Activated T-helper 1 cell treated with anti-CD3 and anti-CD28 coated beads, Interleukin-12 subunit alpha, Interleukin-12 subunit beta, Interleukin-2, Interleukin-4 antibody, amounts not matched to agents 30 ng/mL and 10 ng/mL and 1 ng/mL, durations not matched to agents 14 hours and 24 hours and 36 hours (primary cell): ENCODE measurements at regions of chr12 and their contacts with region 1.

Region 1: DNA sequence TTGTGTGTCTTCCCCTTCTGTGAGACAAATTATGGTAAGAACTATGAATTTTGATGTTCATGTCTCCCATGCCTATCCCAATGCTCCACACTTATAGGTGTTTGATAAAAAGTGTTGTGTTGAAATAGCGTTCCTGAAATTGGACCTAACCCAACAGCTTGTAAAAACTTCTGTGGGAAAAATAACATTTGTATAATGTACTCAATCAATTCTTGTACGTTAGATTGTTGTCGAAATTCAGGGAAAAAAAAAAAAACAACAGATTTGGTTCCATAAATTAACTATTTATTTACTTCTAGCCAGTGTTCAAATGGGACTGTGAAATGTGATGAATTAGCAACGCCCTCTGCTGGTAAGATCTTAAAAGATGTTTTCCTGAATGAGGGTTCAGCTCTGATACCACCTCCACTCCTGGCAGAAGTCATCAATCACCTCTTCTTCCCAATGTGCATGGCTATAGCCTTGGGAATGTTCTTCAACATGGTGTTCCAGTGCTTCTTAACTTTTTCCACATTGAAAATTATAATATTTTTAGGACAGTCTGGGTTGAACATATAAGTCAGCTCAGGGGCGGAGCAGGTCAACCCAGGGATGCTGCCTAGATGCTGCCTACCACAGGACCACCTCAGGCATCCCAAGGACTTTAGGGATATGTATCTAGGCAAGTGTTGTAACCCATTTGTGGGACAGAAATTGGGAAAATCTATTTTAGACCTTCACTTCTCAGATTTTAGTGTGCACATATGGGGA is 170.6 kb downstream of the OTOGL start:
- DNase-seq: no peak
- H3K4me3 Mint-ChIP-seq: no peak overlapping the region
- H3K27ac Mint-ChIP-seq: no peak overlapping the region
- H3K4me1 Mint-ChIP-seq: no peaks in the 10 kb centered on the region
- H3K27me3 Mint-ChIP-seq: no peaks in the 10 kb centered on the region

Region 2: DNA sequence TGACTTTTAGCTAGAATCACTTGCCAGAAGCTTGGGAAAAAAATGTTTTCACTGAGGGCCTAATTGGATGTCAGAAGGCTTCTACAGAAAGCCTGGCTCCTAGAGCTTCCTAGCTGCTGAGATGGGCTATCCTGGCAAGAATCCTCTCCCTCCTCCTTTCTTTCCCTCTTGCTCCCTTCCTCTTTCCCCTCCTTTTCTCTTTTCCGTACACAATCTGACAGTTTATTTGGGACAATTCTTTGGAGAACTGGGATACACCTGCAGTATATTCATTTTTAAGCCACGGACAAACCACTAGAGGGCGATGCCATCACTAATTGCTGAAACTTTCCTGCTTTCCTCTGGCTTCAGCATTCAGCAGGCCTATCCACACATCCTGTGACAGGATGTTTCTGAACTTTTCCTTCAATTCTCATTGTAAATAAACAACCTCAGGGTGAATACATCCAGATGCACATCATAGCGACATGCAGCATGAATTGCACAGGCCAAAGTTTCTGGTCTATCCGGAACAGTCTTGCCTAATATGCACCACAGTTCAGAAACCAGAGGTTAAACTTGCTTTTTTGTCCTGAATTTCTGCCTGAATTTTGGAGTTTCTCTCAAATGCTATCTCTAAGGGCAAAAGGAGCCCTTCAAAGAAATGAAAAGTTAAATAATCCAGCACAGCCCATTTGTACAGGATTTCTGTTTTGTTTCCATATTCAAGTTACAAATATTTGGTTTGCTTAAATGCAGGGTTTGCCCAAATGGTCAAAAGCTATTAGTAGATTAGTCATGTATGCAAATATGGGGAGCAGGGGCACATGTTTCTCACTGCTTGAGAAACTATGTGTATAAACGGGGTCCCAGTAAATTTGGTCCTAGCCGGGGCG is 722.0 kb before region 1 on chr12:
- intact Hi-C with region 1: loop called (anchors 1 kb)
- DNase-seq: no peak
- H3K4me3 Mint-ChIP-seq: no peak overlapping the region
- H3K27ac Mint-ChIP-seq: no peak overlapping the region
- H3K4me1 Mint-ChIP-seq: no peaks in the 10 kb centered on the region
- H3K27me3 Mint-ChIP-seq: no peaks in the 10 kb centered on the region

Region 3: GRCh38 chr12:79737875-79738718 is 531.9 kb before region 1 on chr12:
- intact Hi-C with region 1: loop called (anchors 10 kb)
- DNase-seq: no peak
- H3K4me3 Mint-ChIP-seq: no peak overlapping the region
- H3K27ac Mint-ChIP-seq: no peak overlapping the region
- H3K4me1 Mint-ChIP-seq: no peaks in the 10 kb centered on the region
- H3K27me3 Mint-ChIP-seq: peaks cover 4% of the 10 kb centered on the region

Region 4: DNA sequence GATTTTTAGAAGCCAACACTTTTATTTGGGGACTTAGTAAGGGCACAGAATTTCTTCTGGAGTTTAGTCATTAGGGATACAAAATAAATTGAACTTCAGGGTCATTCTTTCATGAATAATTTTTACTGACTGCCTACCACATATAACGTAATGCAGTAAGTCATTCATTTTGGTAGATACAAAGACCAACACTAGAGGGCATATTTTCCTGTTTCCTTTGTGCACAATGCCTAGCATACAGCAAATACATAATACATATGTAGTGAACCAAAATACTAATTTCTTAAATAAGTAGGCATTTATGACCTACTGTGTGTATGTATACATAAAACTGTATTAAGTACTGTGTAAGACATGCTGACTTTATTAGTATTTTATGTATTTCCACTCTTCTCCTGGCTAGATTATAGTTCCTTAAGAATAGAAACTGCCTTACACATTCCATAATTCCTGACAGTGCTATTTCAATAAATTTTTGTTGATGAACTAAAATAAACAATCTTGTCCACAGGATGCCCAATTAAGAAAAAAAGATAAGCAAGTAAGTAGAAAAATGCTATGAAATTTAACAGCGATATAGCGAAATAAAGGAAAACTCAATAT is 383.0 kb before region 1 on chr12:
- intact Hi-C with region 1: loop called (anchors 1 kb)
- DNase-seq: no peak
- H3K4me3 Mint-ChIP-seq: no peak overlapping the region
- H3K27ac Mint-ChIP-seq: no peak overlapping the region
- H3K4me1 Mint-ChIP-seq: peaks cover 45% of the 10 kb centered on the region
- H3K27me3 Mint-ChIP-seq: no peaks in the 10 kb centered on the region

Region 5: GRCh38 chr12:80053048-80053790 is 216.8 kb before region 1 on chr12:
- intact Hi-C with region 1: loop called (anchors 1 kb)
- DNase-seq: no peak
- H3K4me3 Mint-ChIP-seq: no peak overlapping the region
- H3K27ac Mint-ChIP-seq: no peak overlapping the region
- H3K4me1 Mint-ChIP-seq: no peaks in the 10 kb centered on the region
- H3K27me3 Mint-ChIP-seq: no peaks in the 10 kb centered on the region